ENCODE measurements at regions of chr1 and their contacts with region 1.

Region 1: DNA sequence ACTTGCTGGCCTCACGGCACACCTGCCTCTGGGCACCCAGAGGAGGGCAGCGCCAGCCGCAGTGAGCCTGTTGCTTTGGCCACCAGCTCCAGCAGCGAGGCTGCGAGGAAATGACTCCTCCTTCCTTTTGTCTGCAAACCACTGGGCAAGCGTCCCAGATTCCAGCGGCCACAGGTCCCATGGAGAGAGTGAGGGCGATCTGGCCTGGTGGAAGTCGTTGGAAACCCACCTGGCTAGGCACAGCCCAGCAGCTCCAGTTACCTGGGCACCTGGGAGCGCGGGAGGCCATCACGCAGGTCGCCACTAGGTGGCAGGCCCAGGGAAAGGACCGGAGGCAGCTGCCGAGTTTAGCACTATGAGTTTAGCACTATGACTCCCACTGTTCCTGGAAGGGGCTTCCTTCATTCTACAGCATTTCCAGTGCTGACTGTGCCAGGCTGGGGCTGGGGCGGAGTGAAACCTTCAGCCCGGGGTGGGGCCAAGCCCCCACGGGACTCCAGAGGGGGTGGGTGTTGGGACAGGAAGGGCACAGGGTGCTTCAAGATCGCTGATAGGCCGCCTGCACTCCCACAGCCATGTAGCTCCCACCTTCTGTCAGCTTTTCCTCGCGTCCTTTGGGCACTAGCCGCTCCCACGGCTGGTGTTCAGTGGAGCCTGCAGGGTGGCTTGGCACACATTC is 1.1 kb upstream of the ESPN start:
- DNase-seq: peak; percentile 83
- ATAC-seq: peak; percentile 83
- H3K4me3 Mint-ChIP-seq: peak overlapping the region; percentile 15
- H3K27ac Mint-ChIP-seq: no peak overlapping the region
- H3K4me1 Mint-ChIP-seq: peaks cover 14% of the 10 kb centered on the region
- H3K27me3 Mint-ChIP-seq: peaks cover 50% of the 10 kb centered on the region
- CTCF ChIP-seq: peak; percentile 91

Region 2: GRCh38 chr1:6245086-6245868 is 178.2 kb before region 1 on chr1:
- CTCF ChIA-PET with region 1: interaction called, 20 read pairs
- POLR2A ChIA-PET with region 1: no interaction called
- intact Hi-C with region 1: no loop called
- DNase-seq: peak; percentile 85
- ATAC-seq: peak; percentile 81
- H3K4me3 Mint-ChIP-seq: no peak overlapping the region
- H3K27ac Mint-ChIP-seq: no peak overlapping the region
- H3K4me1 Mint-ChIP-seq: peaks cover 13% of the 10 kb centered on the region
- H3K27me3 Mint-ChIP-seq: peaks cover 57% of the 10 kb centered on the region
- CTCF ChIP-seq: peak; percentile 69

Region 3: GRCh38 chr1:6359216-6360116 is 64.0 kb before region 1 on chr1:
- CTCF ChIA-PET with region 1: interaction called, 10 read pairs
- POLR2A ChIA-PET with region 1: no interaction called
- intact Hi-C with region 1: no loop called
- DNase-seq: peak; percentile 77
- ATAC-seq: peak; percentile 84
- H3K4me3 Mint-ChIP-seq: peak overlapping the region; percentile 46
- H3K27ac Mint-ChIP-seq: peak overlapping the region; percentile 91
- H3K4me1 Mint-ChIP-seq: peaks cover 38% of the 10 kb centered on the region
- H3K27me3 Mint-ChIP-seq: no peaks in the 10 kb centered on the region
- CTCF ChIP-seq: no peak

Region 4: DNA sequence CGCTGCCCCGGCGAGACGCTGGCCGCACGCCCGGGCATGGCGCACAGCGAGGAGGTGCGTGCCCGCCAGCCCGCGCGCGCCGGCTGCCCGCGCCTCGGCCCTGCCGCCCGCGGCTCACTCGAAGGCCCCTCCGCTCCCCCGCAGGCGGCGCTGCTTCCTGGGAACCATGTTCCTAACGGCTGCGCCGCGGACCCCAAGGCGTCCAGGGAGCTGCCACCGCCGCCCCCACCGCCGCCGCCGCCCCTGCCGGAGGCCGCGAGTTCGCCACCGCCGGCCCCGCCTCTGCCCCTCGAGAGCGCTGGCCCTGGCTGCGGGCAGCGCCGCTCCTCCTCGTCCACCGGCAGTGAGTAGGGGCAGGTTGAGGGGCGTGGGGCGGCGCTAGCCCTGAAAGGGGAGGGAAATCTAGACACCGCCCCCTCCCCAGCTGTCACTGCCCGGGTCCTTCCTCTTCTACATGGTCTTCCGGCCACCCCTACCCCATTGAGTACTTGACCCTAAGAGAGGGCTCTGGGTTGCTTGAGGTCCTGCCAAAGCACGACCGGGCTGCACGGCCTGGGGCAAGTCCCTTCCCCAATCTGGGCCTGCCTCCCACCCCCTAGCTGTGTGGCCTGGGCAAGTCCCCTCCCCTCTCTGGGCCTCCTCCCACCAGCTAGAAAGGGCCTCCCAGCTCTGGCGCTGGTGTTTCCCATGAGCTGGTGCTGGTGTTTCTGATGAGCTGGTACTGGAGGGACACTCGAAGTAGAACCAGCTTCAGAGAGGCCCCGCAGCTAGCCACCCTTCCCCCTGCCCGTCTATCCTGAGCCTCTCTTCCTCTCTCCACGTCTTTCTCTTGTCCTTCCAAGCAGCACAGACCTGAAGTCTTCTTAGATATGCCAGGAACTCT is 25.5 kb after region 1 on chr1:
- CTCF ChIA-PET with region 1: interaction called, 33 read pairs
- POLR2A ChIA-PET with region 1: no interaction called
- intact Hi-C with region 1: no loop called
- DNase-seq: peak; percentile 45
- ATAC-seq: peak; percentile 54
- H3K4me3 Mint-ChIP-seq: peak overlapping the region; percentile 32
- H3K27ac Mint-ChIP-seq: no peak overlapping the region
- H3K4me1 Mint-ChIP-seq: peaks cover 29% of the 10 kb centered on the region
- H3K27me3 Mint-ChIP-seq: peaks cover 62% of the 10 kb centered on the region
- CTCF ChIP-seq: no peak

Region 5: GRCh38 chr1:6460301-6461050 is 37.0 kb after region 1 on chr1:
- CTCF ChIA-PET with region 1: interaction called, 12 read pairs
- POLR2A ChIA-PET with region 1: no interaction called
- intact Hi-C with region 1: no loop called
- DNase-seq: peak; percentile 91
- ATAC-seq: peak; percentile 87
- H3K4me3 Mint-ChIP-seq: peak overlapping the region; percentile 66
- H3K27ac Mint-ChIP-seq: peak overlapping the region; percentile 93
- H3K4me1 Mint-ChIP-seq: peaks cover 50% of the 10 kb centered on the region
- H3K27me3 Mint-ChIP-seq: peaks cover 16% of the 10 kb centered on the region
- CTCF ChIP-seq: no peak

Region 6: GRCh38 chr1:6489799-6490180 is 66.3 kb after region 1 on chr1:
- CTCF ChIA-PET with region 1: interaction called, 10 read pairs
- POLR2A ChIA-PET with region 1: no interaction called
- intact Hi-C with region 1: no loop called
- DNase-seq: peak; percentile 82
- ATAC-seq: peak; percentile 62
- H3K4me3 Mint-ChIP-seq: peak overlapping the region; percentile 77
- H3K27ac Mint-ChIP-seq: peak overlapping the region; percentile 57
- H3K4me1 Mint-ChIP-seq: peaks cover 25% of the 10 kb centered on the region
- H3K27me3 Mint-ChIP-seq: peaks cover 13% of the 10 kb centered on the region
- CTCF ChIP-seq: peak; percentile 100

Measured in activated CD8-positive, alpha-beta T cell treated with anti-CD3 and anti-CD28 coated beads for 36 hours (primary cell).